ENCODE measurements at regions of chr15 and their contacts with region 1.

Region 1: DNA sequence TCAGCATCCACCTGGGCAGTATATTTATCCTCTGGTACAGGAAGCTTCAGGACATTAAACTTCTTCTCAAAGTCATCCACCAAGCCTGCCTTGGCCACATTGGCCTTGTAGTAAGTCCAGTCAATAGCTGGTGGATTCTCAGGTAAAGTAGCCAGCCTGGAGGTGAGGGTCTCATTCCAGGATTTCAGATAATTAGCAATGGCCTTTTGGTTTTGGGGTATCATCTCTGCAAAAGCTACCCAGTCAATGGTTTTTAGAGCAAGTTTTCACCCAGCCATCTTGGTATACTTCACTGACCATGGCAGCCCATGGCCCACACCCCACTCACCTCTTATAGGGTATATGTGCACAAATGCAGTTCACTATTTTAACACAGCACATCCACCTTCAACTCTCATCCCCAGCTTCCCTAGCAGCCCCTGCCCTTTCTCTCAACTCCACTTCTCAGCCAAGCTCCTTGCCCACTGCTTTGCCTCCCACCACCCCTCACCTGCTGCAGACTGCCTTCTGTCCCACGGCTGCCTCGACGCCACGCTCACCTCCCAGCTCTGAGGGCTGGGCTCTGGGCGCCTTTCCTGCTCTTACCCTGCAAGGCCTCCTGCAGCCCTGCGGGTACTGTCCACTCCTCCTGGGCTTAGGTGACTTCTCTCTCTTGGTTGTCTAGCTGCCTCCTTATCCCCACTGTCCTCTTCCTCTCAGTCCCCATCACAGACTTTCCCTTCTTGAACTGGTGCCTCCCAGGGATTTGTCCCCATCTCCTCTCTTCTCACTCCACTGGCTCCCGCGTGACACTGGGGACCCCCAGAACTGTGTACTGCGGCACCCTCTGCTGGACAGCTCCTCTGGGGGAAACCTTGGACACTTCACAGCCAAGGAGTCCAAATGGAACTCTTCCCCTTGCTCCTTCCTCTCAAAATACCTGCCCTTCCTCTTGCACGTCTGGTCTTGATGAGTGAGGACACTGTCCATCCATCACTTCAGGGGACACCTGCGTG is 1.7 kb upstream of the TGM5 start:
- DNase-seq: no peak
- H3K4me3 Mint-ChIP-seq: no peak overlapping the region
- H3K27ac Mint-ChIP-seq: no peak overlapping the region
- H3K4me1 Mint-ChIP-seq: peaks cover 14% of the 10 kb centered on the region
- H3K27me3 Mint-ChIP-seq: peaks cover 24% of the 10 kb centered on the region

Region 2: DNA sequence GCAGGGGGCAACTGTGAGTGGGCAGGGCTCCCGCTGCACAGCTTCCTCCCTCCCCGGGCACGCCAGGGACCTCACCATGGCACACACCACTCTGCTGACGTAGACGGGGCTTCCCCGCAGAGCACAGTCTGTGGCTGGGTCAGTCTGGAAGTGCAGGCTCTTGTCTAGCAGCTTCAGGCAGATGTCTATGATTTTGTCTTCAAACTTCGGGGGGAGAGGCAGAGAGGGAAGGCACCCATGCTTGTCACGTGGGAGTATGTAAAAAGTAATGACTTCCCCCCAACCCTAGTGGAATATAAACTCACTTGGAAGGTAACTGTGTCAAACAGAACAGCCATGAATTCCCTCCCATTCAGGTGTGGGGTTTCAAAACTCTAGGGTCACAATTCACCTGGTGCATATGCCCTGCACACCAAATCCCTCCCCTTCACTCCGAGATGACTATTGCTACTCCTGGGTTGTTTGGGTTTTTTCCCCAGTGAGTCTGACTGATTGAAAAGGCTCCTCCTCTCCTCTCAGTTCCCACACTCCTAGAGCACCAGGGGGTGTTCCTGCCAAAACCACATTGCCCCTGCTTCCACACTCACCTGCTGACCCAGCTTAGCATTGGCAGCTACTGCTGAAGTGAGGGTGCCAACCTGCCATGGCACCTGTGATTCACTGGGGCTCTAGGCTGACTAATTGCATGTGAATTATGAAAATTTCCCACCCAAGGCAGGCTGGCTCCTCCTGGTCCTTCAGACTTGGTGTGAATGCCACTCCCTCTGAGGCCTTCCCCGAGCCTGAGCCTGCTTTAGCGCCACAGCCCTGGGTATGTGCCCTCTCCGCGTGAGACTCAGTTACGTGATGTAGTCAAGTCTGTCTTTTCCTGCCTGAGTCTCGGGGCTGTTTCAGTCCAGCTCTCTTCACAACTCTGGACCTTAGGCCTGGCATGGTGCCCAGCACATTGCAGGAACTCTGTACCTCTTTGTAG is 14.7 kb before region 1 on chr15:
- CTCF ChIA-PET with region 1: interaction called, 10 read pairs
- POLR2A ChIA-PET with region 1: no interaction called
- DNase-seq: no peak
- H3K4me3 Mint-ChIP-seq: no peak overlapping the region
- H3K27ac Mint-ChIP-seq: no peak overlapping the region
- H3K4me1 Mint-ChIP-seq: peaks cover 30% of the 10 kb centered on the region
- H3K27me3 Mint-ChIP-seq: peaks cover 2% of the 10 kb centered on the region

Region 3: DNA sequence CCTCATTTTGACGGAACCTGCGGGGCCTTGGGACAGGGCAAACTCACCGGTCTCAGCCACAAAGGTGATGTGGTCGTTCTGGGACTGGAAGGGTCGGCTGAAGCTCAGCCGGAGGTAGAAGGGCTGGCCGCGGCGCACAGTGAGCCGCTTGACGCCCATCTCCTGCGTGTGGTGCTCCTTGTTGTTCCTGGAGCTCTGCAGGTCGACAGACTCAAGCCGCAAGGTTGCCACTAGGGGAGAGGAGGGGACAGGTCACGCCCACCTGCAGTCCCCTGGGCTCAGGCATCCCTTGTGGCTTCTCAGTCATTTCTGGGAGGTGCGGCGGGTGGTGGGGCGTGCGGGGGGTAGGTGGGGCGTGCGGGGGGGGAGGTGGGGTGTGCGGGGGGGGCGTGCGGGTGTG is 25.0 kb after region 1 on chr15:
- CTCF ChIA-PET with region 1: no interaction called
- POLR2A ChIA-PET with region 1: no interaction called
- DNase-seq: no peak
- H3K4me3 Mint-ChIP-seq: no peak overlapping the region
- H3K27ac Mint-ChIP-seq: no peak overlapping the region
- H3K4me1 Mint-ChIP-seq: no peaks in the 10 kb centered on the region
- H3K27me3 Mint-ChIP-seq: peaks cover 48% of the 10 kb centered on the region

Measured in activated CD4-positive, alpha-beta T cell treated with anti-CD3 and anti-CD28 coated beads, Interleukin-2, amount 10 ng/mL, durations not matched to agents 7 days and 5 days (primary cell).